Aorta (tissue), 5 donors: ENCODE measurements at regions of chr10 and their contacts with region 1.

Region 1: GRCh38 chr10:33330543-33331378 is 3.7 kb downstream of the NRP1 start:
- DNase-seq: peak; percentile 91 to 95
- ATAC-seq: peak; percentile 60
- H3K4me3 ChIP-seq: peak overlapping the region; percentile 65 to 69
- H3K27ac ChIP-seq: no peak overlapping the region
- H3K4me1 ChIP-seq: peaks cover 0 to 6% of the 10 kb centered on the region in 2 donors
- H3K27me3 ChIP-seq: no peaks in the 10 kb centered on the region

Region 2: DNA sequence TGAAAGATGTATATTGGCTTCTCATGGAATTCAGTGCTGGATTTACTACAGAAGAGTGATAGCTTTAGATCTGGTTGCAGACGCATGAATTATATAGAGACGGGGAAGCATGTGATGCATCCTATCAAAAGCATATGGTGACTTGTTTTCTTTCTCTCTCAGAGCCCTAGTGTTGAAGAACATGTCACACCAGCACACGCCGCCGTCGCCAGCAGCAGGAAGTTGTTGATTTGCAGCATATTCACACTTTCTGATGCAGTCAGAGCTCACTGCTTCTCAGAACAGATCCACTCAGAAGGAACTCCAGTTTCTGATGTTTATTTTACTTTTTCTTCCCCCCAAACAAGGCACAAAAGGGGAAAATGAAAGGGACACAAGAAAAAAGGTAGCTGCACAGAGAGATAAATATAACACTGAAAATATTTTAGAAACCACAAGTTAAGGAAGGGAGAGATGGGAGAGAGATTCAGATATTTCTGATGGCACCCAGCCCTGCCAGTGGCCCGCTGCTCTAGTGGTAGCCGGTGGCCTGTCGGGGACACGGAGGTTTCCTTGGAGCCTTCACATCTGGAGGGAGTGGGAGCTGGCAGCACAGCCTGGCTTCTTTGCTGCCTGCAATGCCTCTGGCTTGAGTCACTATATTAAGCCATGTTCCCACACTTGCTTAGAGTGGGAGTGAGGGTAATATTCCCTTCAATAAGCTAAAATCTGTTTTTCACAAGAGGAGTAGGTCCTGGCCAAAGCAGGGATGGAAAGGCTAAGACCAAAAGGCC is 119.5 kb before region 1 on chr10:
- intact Hi-C with region 1: loop called in 1 of 2 experiments (anchors 5 kb)
- DNase-seq: peak; percentile 76 to 85
- ATAC-seq: peak; percentile 78
- H3K4me3 ChIP-seq: no peak overlapping the region
- H3K27ac ChIP-seq: peak overlapping the region; percentile 42 to 61
- H3K4me1 ChIP-seq: no peaks in the 10 kb centered on the region
- H3K27me3 ChIP-seq: no peaks in the 10 kb centered on the region

Region 3: DNA sequence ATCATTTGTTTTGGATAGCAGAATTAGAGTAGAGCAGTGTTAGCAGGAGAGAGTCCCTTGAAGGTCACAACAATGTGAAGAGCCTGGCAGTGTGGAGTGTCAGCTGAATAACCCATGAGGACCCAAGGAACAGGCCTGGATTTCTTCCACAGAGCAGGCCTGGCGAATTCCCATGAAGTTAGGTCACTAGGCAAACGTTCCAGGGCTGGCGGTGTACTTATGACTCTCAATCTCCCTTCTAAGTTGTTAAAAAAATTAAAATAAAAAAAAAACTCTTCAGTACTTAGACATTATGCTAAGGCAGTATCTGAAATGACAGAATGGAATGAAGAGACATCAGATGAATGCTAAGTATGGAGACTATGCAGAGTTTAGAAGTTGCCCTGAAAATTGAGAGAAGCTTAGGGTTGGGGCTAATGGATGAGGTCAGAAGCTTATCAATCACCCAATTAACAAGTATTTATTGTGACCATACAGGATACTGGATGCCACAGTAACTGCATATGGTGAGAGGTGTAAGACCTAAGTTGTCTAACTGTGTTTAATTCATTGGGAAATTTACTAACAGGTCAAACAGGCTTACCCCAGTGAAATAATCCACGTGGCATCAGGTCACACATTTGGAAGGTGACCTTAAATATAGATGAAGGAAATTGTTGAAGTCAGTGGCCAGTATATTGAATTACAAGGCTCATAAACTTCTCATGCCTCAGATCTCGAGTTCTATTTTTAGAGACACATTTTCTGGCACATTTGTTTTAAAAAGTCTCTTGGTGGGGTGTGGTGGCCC is 129.9 kb after region 1 on chr10:
- intact Hi-C with region 1: loop called in 1 of 2 experiments (anchors 10 kb)
- DNase-seq: peak; percentile 77 to 87
- ATAC-seq: peak; percentile 76
- H3K4me3 ChIP-seq: no peak overlapping the region
- H3K27ac ChIP-seq: peak overlapping the region; percentile 51 to 93
- H3K4me1 ChIP-seq: peaks cover 4 to 10% of the 10 kb centered on the region in 2 donors
- H3K27me3 ChIP-seq: no peaks in the 10 kb centered on the region

Region 4: DNA sequence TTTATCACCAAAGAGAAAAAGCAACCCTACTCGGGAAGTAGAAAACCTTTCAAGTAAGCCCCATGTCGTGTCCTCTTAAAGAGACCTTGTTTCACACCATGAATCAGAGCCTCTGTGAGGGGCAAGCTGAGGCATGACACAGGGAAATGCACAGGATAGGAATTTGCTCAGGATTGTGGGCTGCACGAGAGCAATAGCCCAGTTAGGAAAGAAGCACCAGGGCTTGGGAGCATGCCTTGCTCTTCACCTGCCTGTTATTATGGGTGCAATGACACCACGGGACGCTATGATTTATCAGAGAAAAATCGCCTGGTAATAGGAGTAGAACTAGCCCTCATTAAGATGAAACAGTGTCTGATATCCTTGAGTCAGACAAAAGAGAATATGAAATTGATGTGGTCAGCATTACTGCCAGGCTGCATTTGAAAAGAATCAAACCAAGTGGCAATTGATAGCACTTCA is 566.6 kb after region 1 on chr10:
- intact Hi-C with region 1: loop called in 1 of 2 experiments (anchors 10 kb)
- DNase-seq: no peak
- ATAC-seq: no peak
- H3K4me3 ChIP-seq: no peak overlapping the region
- H3K27ac ChIP-seq: peak overlapping the region in 1 of 2 donors; percentile 28
- H3K4me1 ChIP-seq: peaks cover 3 to 8% of the 10 kb centered on the region in 2 donors
- H3K27me3 ChIP-seq: no peaks in the 10 kb centered on the region

Region 5: GRCh38 chr10:34102237-34102673 is 771.5 kb after region 1 on chr10:
- intact Hi-C with region 1: loop called in 1 of 2 experiments (anchors 10 kb)
- DNase-seq: peak; percentile 85
- ATAC-seq: peak; percentile 92
- H3K4me3 ChIP-seq: no peak overlapping the region
- H3K27ac ChIP-seq: peak overlapping the region in 1 of 2 donors; percentile 53
- H3K4me1 ChIP-seq: no peaks in the 10 kb centered on the region
- H3K27me3 ChIP-seq: no peaks in the 10 kb centered on the region

Region 6: DNA sequence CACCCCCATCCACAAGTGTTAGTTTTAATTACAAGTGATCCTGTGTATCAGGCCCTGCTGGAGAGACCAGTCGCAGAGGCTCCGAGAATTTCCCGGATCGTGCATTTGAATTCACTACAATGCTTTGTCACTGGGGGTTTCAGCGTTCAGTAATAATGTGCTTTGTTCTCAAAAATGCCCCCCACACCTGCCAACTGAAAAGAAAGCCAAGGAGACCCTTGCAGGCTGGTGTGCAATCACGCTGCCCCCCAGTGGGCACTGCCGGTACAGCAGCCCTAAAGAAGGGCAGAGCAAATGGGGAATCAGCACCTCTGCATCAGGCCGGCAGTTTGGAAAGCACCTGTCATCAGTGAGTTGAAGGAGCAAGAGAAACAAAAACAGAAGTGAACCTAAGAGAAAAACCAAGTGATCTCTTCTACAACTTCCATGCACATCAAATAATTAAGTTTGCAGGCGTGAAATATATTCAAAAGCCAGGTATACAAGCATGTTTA is 1306.7 kb after region 1 on chr10:
- intact Hi-C with region 1: loop called (anchors 2 to 5 kb)
- DNase-seq: peak; percentile 64 to 88
- ATAC-seq: peak; percentile 87
- H3K4me3 ChIP-seq: no peak overlapping the region
- H3K27ac ChIP-seq: no peak overlapping the region
- H3K4me1 ChIP-seq: no peaks in the 10 kb centered on the region
- H3K27me3 ChIP-seq: no peaks in the 10 kb centered on the region